ENCODE measurements at regions of chr14 and their contacts with region 1.

Region 1: GRCh38 chr14:33848706-33849454 is 102.0 kb downstream of the EGLN3 start:
- DNase-seq: peak; percentile 51 to 77
- H3K4me3 ChIP-seq: no peak overlapping the region
- H3K27ac ChIP-seq: no peak overlapping the region
- H3K4me1 ChIP-seq: no peaks in the 10 kb centered on the region
- H3K27me3 ChIP-seq: no peaks in the 10 kb centered on the region
- CTCF ChIP-seq: peak; percentile 64

Region 2: GRCh38 chr14:33859306-33859705 is 10.4 kb after region 1 on chr14:
- CTCF ChIA-PET with region 1: no interaction called
- POLR2A ChIA-PET with region 1: no interaction called
- intact Hi-C with region 1: no loop called
- DNase-seq: no peak
- H3K4me3 ChIP-seq: no peak overlapping the region
- H3K27ac ChIP-seq: no peak overlapping the region
- H3K4me1 ChIP-seq: 0 out of 2 replicates have a peak, but pooled peaks cover 13% of the 10 kb centered on the region
- H3K27me3 ChIP-seq: no peaks in the 10 kb centered on the region
- CTCF ChIP-seq: no peak

Region 3: DNA sequence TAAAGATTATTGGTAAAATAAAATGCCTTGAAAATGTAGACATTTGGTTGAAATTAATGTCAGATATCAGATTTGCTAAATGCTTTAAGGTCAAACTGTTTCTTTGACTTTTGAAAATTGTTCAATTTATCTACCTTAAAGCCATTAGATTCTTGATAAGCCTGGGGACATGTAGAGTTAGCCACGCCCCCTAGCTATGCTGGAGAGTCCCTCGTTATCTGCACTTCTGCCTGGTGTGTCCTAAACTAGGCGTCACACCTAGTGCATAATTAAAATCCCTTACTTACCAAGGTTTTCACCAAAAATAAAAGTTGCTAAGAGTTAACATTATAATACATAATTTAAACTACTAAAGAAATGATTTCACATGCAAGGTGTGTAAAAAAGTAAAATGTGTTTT is 22.5 kb after region 1 on chr14:
- CTCF ChIA-PET with region 1: interaction called, 16 read pairs
- POLR2A ChIA-PET with region 1: no interaction called
- intact Hi-C with region 1: no loop called
- DNase-seq: no peak
- H3K4me3 ChIP-seq: no peak overlapping the region
- H3K27ac ChIP-seq: no peak overlapping the region
- H3K4me1 ChIP-seq: no peaks in the 10 kb centered on the region
- H3K27me3 ChIP-seq: no peaks in the 10 kb centered on the region
- CTCF ChIP-seq: no peak

Region 4: GRCh38 chr14:33938131-33938949 is 89.5 kb after region 1 on chr14:
- CTCF ChIA-PET with region 1: interaction called, 3 read pairs
- POLR2A ChIA-PET with region 1: no interaction called
- intact Hi-C with region 1: loop called (anchors 2 kb)
- DNase-seq: peak; percentile 82 to 85
- H3K4me3 ChIP-seq: peak overlapping the region; percentile 51; the same call in 1 of the 2 replicates
- H3K27ac ChIP-seq: peak overlapping the region; percentile 85
- H3K4me1 ChIP-seq: peaks cover 45% of the 10 kb centered on the region
- H3K27me3 ChIP-seq: no peaks in the 10 kb centered on the region
- CTCF ChIP-seq: no peak

Region 5: GRCh38 chr14:34051966-34052657 is 203.2 kb after region 1 on chr14:
- CTCF ChIA-PET with region 1: interaction called, 4 read pairs
- POLR2A ChIA-PET with region 1: interaction called, 3 read pairs
- intact Hi-C with region 1: loop called (anchors 5 kb)
- DNase-seq: peak in 1 of 2 experiments; percentile 70
- H3K4me3 ChIP-seq: no peak overlapping the region
- H3K27ac ChIP-seq: peak overlapping the region; percentile 27; the same call in 1 of the 2 replicates
- H3K4me1 ChIP-seq: peaks cover 24% of the 10 kb centered on the region
- H3K27me3 ChIP-seq: no peaks in the 10 kb centered on the region
- CTCF ChIP-seq: no peak

Region 6: GRCh38 chr14:34098045-34098984 is 249.4 kb after region 1 on chr14:
- CTCF ChIA-PET with region 1: interaction called, 12 read pairs
- POLR2A ChIA-PET with region 1: interaction called, 7 read pairs
- intact Hi-C with region 1: loop called (anchors 1 kb)
- DNase-seq: peak; percentile 43 to 75
- H3K4me3 ChIP-seq: no peak overlapping the region
- H3K27ac ChIP-seq: no peak overlapping the region
- H3K4me1 ChIP-seq: peaks cover 29% of the 10 kb centered on the region
- H3K27me3 ChIP-seq: no peaks in the 10 kb centered on the region
- CTCF ChIP-seq: peak; percentile 75

Region 7: GRCh38 chr14:34227834-34228649 is 379.2 kb after region 1 on chr14:
- CTCF ChIA-PET with region 1: no interaction called
- POLR2A ChIA-PET with region 1: no interaction called
- intact Hi-C with region 1: loop called (anchors 2 kb)
- DNase-seq: peak in 1 of 2 experiments; percentile 50
- H3K4me3 ChIP-seq: no peak overlapping the region; the same call in 1 of the 2 replicates
- H3K27ac ChIP-seq: no peak overlapping the region
- H3K4me1 ChIP-seq: peaks cover 5% of the 10 kb centered on the region; the same call in 1 of the 2 replicates
- H3K27me3 ChIP-seq: no peaks in the 10 kb centered on the region
- CTCF ChIP-seq: peak; percentile 80